ENCODE measurements at regions of chr19 and their contacts with region 1.

Region 1: DNA sequence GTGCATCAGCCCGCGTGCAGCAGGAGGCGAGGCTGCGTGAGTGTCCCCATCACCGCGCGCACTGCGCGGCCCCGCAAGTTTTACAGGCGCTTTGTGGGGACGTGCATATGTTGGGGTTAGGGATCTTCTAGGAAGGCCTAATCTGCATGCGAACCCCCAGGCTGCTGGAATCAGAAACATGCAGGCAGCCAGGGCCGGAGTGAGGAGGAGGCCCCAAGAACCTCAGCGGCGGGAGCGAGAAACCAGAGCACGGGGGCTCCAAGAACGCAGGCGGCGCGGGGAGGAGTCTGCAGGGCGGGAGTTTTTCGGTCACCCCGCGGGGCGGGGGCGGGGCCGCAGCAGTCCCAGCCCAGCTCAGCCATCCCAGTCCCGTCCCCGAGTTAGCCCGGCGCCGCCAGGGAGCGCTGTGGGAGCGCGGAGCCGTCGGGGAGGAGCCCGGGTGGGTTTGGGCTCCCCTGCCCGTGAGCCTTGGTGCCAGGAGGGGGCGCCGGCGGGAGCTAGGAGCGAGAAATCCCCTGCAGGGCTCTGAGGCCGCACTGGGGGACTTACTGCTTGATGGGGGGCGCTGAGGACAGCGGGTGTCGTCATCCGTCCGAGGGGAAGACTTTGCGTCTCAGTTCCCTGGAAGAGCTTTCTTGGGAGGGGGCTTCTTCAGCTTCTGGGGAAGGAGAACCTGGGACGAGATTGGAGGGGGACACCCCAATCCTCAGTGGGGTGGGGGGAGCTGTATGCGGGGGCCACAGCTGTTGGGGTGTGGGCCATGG is 933 bp upstream of the NRTN start:
- DNase-seq: peak; percentile 95
- H3K4me3 ChIP-seq: peak overlapping the region in 3 of 4 donors; percentile 8 to 48 (median 47)
- H3K27ac ChIP-seq: peak overlapping the region; percentile 33 to 86 (median 55)
- H3K4me1 ChIP-seq: peaks cover 4 to 31% (median 22%) of the 10 kb centered on the region in 4 donors
- H3K27me3 ChIP-seq: peaks cover 30% of the 10 kb centered on the region
- CTCF ChIP-seq: peak; percentile 89 to 98 (median 95)
- EP300 ChIP-seq: no peak
- POLR2A ChIP-seq: peak; percentile 17

Region 2: DNA sequence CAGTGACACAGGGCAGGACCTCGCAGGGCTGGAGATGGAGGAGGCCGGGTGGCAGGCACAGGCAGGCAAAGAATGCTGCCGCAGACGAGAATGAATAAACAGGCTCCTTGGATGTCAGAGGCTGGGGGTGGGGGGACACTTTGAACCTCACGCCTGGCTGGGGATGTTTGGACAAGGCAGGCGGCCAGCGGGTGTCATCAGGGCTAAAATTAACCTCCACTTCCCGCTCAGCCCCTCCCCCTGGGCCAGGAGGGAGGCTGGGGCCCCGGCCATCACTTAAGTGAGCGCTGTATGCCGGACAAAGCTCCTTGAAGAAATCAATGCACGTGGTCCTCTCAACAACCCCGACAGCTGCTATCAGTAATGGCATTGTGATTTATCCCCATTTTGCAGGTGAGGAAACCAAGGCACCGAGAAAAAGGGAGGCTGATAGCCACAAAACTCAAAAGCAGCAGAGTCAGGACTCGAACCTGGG is 76.7 kb after region 1 on chr19:
- in situ Hi-C with region 1: loop called in 1 of 4 experiments (anchors 10 kb)
- intact Hi-C with region 1: no loop called
- DNase-seq: peak; percentile 74
- H3K4me3 ChIP-seq: no peak overlapping the region
- H3K27ac ChIP-seq: peak overlapping the region; percentile 63 to 84 (median 75)
- H3K4me1 ChIP-seq: peaks cover 12 to 15% (median 13%) of the 10 kb centered on the region in 4 donors
- H3K27me3 ChIP-seq: peaks cover 45% of the 10 kb centered on the region
- CTCF ChIP-seq: no peak
- EP300 ChIP-seq: peak; percentile 62
- POLR2A ChIP-seq: no peak

Region 3: DNA sequence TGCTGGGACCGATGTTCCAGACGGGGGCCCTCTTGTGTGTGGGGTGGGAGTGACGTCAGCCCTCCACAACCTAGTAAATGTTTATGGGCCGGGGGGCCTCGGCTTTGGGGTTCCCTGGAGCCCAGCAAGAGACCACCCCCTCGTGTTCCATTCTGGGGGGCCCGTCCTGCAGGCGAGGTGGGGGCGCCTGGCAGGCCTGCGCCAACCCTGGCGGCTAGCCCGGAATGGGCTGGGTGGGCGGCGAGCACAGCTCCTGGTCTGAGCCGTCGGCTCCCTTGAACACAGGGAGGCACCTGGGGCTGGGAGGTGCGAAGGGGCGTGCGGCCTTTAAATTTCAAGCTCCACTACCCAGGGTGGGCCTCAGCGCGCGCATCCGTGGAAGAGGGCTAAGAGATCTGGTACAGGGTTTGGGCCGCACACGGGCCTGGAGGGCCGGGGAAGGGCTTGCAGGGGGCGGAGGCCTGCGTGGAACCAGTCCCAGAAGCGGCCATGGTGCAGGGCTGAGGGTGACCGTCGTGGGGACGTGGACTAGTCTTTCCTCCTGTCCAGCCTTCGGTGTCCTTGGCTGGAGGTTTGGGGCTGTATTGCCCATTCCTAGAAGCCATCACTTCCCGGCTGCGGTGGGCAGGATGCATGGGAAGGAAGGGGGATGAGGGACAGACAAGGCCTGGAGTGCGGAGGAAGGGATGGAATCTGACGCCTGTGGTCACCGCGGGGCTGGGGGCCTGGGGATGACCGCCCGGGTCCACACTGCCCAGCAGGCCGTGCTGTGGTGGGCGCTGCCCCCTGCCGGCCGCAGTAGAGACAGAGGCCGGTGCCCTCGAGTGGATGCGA is 88.2 kb after region 1 on chr19:
- in situ Hi-C with region 1: loop called in 2 of 4 experiments (anchors 10 kb)
- intact Hi-C with region 1: loop called (anchors 2 kb)
- DNase-seq: peak; percentile 58
- H3K4me3 ChIP-seq: no peak overlapping the region
- H3K27ac ChIP-seq: no peak overlapping the region
- H3K4me1 ChIP-seq: peaks cover 6 to 17% (median 12%) of the 10 kb centered on the region in 4 donors
- H3K27me3 ChIP-seq: peaks cover 21% of the 10 kb centered on the region
- CTCF ChIP-seq: peak; percentile 65 to 91 (median 78)
- EP300 ChIP-seq: no peak
- POLR2A ChIP-seq: no peak

Region 4: GRCh38 chr19:6021878-6022569 is 218.1 kb after region 1 on chr19:
- in situ Hi-C with region 1: loop called in 1 of 4 experiments (anchors 10 kb)
- intact Hi-C with region 1: no loop called
- DNase-seq: peak; percentile 81
- H3K4me3 ChIP-seq: no peak overlapping the region
- H3K27ac ChIP-seq: no peak overlapping the region
- H3K4me1 ChIP-seq: no peaks in the 10 kb centered on the region
- H3K27me3 ChIP-seq: no peaks in the 10 kb centered on the region
- CTCF ChIP-seq: peak; percentile 59 to 84 (median 70)
- EP300 ChIP-seq: no peak
- POLR2A ChIP-seq: no peak

Measured in transverse colon (tissue), 4 donors.